ENCODE measurements at regions of chr4 and their contacts with region 1.

Region 1: DNA sequence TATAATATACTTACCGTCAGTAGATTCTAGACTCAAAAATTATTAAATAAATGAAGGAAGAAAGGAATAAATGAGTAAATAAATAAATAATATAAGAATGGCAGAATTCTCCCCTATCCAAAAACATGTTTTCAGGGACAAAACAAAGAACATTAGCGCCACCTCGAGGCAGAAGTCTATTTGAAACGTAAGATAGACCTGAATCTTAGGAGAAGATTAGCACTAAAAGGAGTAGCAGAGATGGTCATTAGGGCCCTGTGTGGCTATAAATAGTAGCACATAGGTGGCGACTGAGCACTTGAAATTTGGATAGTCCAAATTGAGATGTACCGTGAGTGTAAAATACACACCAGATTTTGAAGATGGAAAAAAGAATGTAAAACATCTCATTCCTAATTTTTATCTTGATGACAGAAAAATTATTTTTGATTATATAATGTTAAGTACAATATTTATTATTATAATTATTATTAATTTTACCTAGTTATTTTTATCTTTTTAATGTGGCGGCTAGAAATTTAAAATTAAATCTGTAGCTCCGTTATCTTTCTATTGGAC is 24.3 kb upstream of the SRD5A3 start:
- DNase-seq: peak in 1 of 2 donors; percentile 77
- ATAC-seq: peak; percentile 54
- H3K4me3 ChIP-seq: no peak overlapping the region
- H3K27ac ChIP-seq: no peak overlapping the region
- H3K4me1 ChIP-seq: no peaks in the 10 kb centered on the region
- H3K27me3 ChIP-seq: no peaks in the 10 kb centered on the region

Region 2: GRCh38 chr4:54971474-54971950 is 350.3 kb before region 1 on chr4:
- intact Hi-C with region 1: loop called (anchors 2 to 5 kb)
- DNase-seq: no peak
- ATAC-seq: peak; percentile 82
- H3K4me3 ChIP-seq: no peak overlapping the region
- H3K27ac ChIP-seq: no peak overlapping the region
- H3K4me1 ChIP-seq: no peaks in the 10 kb centered on the region
- H3K27me3 ChIP-seq: no peaks in the 10 kb centered on the region

Region 3: GRCh38 chr4:54999003-54999402 is 322.8 kb before region 1 on chr4:
- intact Hi-C with region 1: loop called (anchors 1 to 5 kb)
- DNase-seq: no peak
- ATAC-seq: peak; percentile 72
- H3K4me3 ChIP-seq: no peak overlapping the region
- H3K27ac ChIP-seq: no peak overlapping the region
- H3K4me1 ChIP-seq: no peaks in the 10 kb centered on the region
- H3K27me3 ChIP-seq: no peaks in the 10 kb centered on the region